ENCODE measurements at regions of chr6 and their contacts with region 1.

Region 1: DNA sequence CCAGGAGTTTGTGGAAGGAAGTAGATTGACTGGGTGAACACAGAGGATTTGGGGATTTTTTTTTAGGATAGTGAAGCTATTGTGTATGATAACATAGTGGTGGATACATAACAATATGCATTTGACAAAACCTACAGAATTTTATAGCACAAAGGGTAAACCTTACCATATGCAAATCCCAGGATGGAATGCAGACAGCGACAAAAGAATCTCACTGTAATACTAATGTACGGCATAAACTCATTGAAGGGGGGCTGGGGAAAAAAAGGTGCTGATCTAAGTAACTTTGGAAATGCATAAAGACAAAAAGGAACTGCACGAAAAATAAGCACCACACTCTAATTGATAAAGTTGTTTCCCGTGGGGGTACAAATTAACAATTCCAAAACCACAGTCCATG is 15.2 kb upstream of the PLAGL1 start:
- DNase-seq: no peak
- ATAC-seq: no peak
- H3K4me3 ChIP-seq: no peak overlapping the region
- H3K27ac ChIP-seq: no peak overlapping the region
- H3K4me1 ChIP-seq: no peaks in the 10 kb centered on the region
- H3K27me3 ChIP-seq: peaks cover 15% of the 10 kb centered on the region
- CTCF ChIP-seq: no peak

Region 2: GRCh38 chr6:143901885-143902750 is 121.1 kb before region 1 on chr6:
- CTCF ChIA-PET with region 1: no interaction called
- POLR2A ChIA-PET with region 1: no interaction called
- in situ Hi-C with region 1: no loop called
- intact Hi-C with region 1: no loop called
- DNase-seq: no peak
- ATAC-seq: no peak
- H3K4me3 ChIP-seq: no peak overlapping the region
- H3K27ac ChIP-seq: no peak overlapping the region
- H3K4me1 ChIP-seq: no peaks in the 10 kb centered on the region
- H3K27me3 ChIP-seq: no peaks in the 10 kb centered on the region; the same call in 1 of the 2 replicates
- CTCF ChIP-seq: no peak

Region 3: GRCh38 chr6:144087789-144088426 is 64.7 kb after region 1 on chr6:
- CTCF ChIA-PET with region 1: interaction called, 13 read pairs
- POLR2A ChIA-PET with region 1: no interaction called
- in situ Hi-C with region 1: no loop called
- intact Hi-C with region 1: no loop called
- DNase-seq: no peak
- ATAC-seq: no peak
- H3K4me3 ChIP-seq: no peak overlapping the region
- H3K27ac ChIP-seq: no peak overlapping the region
- H3K4me1 ChIP-seq: no peaks in the 10 kb centered on the region
- H3K27me3 ChIP-seq: no peaks in the 10 kb centered on the region
- CTCF ChIP-seq: no peak